Thyroid gland (tissue), 4 donors: ENCODE measurements at regions of chr21 and their contacts with region 1.

Region 1: GRCh38 chr21:45973659-45974072 is 7.9 kb upstream of the COL6A1 start:
- DNase-seq: peak; percentile 77 to 78
- H3K4me3 ChIP-seq: peak overlapping the region; percentile 37 to 59 (median 41)
- H3K27ac ChIP-seq: peak overlapping the region; percentile 64 to 80 (median 74)
- H3K4me1 ChIP-seq: peaks cover 8 to 56% of the 10 kb centered on the region in 2 donors
- H3K27me3 ChIP-seq: no peaks in the 10 kb centered on the region
- CTCF ChIP-seq: peak; percentile 28 to 74 (median 60)
- POLR2A ChIP-seq: no peak

Region 2: DNA sequence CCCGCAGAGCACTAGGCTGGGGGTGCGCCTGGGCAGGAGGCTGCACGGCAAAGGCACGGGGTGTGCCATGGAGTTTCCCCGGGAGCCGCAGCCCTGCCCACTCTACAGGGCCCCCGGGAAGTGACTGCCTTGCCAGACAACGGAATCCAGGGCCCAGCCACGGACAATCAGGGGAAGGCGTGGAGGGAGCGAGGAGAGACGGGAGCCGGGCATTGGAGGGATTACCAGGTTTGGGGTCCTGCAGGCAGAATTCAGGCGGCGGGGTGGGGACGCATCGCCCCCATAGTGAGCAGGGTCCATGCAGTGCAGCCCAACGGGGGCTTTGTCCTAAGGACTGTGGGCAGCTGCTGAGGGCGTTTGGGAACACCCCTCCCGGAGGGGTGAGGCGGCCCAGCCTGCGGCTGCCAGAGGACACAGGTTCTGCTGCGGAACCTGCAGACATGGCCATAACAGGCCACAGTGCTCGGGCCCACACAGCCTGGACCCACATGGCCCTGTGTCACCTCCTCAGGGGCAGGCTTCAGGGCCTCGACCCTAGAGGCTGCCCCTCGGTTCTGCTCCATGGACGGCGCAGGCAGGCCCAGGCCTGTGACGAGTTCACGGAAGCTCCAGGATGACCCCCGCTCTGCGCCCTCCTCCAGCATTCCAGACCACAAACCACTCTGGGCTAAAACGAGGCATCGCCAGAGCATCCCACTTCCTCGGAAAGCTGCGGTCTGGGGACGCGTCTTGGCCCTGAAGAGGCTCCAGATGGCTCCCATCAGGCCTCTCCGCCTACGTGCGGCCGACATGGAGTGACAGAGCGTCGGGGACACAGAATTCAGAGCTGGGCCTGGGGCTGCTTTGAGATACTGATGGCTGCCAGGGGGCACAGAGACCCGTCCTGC is 62.4 kb after region 1 on chr21:
- intact Hi-C with region 1: no loop called
- DNase-seq: no peak
- H3K4me3 ChIP-seq: no peak overlapping the region
- H3K27ac ChIP-seq: peak overlapping the region in 1 of 3 donors; percentile 17
- H3K4me1 ChIP-seq: peaks cover 0 to 4% of the 10 kb centered on the region in 2 donors
- H3K27me3 ChIP-seq: no peaks in the 10 kb centered on the region
- CTCF ChIP-seq: no peak
- POLR2A ChIP-seq: no peak

Region 3: GRCh38 chr21:46097336-46098293 is 123.9 kb after region 1 on chr21 and contains the start of gene COL6A2:
- intact Hi-C with region 1: loop called (anchors 2 kb)
- DNase-seq: peak; percentile 31 to 39
- H3K4me3 ChIP-seq: peak within 1 kb of the TSS in 2 of 3 donors; percentile 20 to 80
- H3K27ac ChIP-seq: peak within 1 kb of the TSS; percentile 64 to 80 (median 80)
- H3K4me1 ChIP-seq: peaks cover 0 to 13% of the 10 kb centered on the region in 2 donors
- H3K27me3 ChIP-seq: no peaks in the 10 kb centered on the region
- CTCF ChIP-seq: peak in 1 of 6 experiments; percentile 23
- POLR2A ChIP-seq: no peak
- total RNA-seq, gene COL6A2: 79.4 to 191 (median 172) TPM

Region 4: GRCh38 chr21:46228345-46229051 is 254.8 kb after region 1 on chr21 and contains the start of gene LSS:
- intact Hi-C with region 1: loop called (anchors 5 kb)
- DNase-seq: peak; percentile 99
- H3K4me3 ChIP-seq: peak within 1 kb of the TSS; percentile 81 to 95 (median 94)
- H3K27ac ChIP-seq: peak within 1 kb of the TSS; percentile 15 to 74 (median 74)
- H3K4me1 ChIP-seq: peaks cover 13 to 18% of the 10 kb centered on the region in 2 donors
- H3K27me3 ChIP-seq: no peaks in the 10 kb centered on the region
- CTCF ChIP-seq: no peak
- POLR2A ChIP-seq: peak in 1 of 2 donors; percentile 69
- total RNA-seq, gene LSS: 31.4 to 57.7 (median 42.0) TPM